ENCODE measurements at regions of chr20 and their contacts with region 1.

Region 1: GRCh38 chr20:62953839-62954703 is 1.6 kb downstream of the SLC17A9 start:
- DNase-seq: peak; percentile 94
- ATAC-seq: peak; percentile 82
- H3K4me3 ChIP-seq: peak overlapping the region; percentile 23 to 62 (median 54)
- H3K4me3 Mint-ChIP-seq: peak overlapping the region; percentile 85
- H3K27ac ChIP-seq: peak overlapping the region; percentile 82 to 91
- H3K27ac Mint-ChIP-seq: peak overlapping the region; percentile 92
- H3K4me1 ChIP-seq: peaks cover 31 to 47% of the 10 kb centered on the region in 2 donors
- H3K4me1 Mint-ChIP-seq: peaks cover 44% of the 10 kb centered on the region
- H3K27me3 ChIP-seq: no peaks in the 10 kb centered on the region
- H3K27me3 Mint-ChIP-seq: no peaks in the 10 kb centered on the region
- CTCF ChIP-seq: no peak

Region 2: GRCh38 chr20:62237801-62238571 is 716.1 kb before region 1 on chr20 and contains the start of gene OSBPL2:
- CTCF ChIA-PET with region 1: no interaction called
- POLR2A ChIA-PET with region 1: no interaction called
- intact Hi-C with region 1: loop called (anchors 5 kb)
- DNase-seq: peak; percentile 100
- ATAC-seq: peak; percentile 98
- H3K4me3 ChIP-seq: peak within 1 kb of the TSS; percentile 46 to 74 (median 60)
- H3K4me3 Mint-ChIP-seq: peak within 1 kb of the TSS; percentile 90
- H3K27ac ChIP-seq: peak within 1 kb of the TSS; percentile 43 to 83
- H3K27ac Mint-ChIP-seq: peak within 1 kb of the TSS; percentile 96
- H3K4me1 ChIP-seq: peaks cover 17 to 22% of the 10 kb centered on the region in 2 donors
- H3K4me1 Mint-ChIP-seq: peaks cover 30% of the 10 kb centered on the region
- H3K27me3 ChIP-seq: peaks cover 0 to 17% (median 1%) of the 10 kb centered on the region in 4 experiments
- H3K27me3 Mint-ChIP-seq: peaks cover 7% of the 10 kb centered on the region
- CTCF ChIP-seq: no peak
- total RNA-seq, gene OSBPL2: 74.3 and 76.6 TPM in 2 replicates

Region 3: DNA sequence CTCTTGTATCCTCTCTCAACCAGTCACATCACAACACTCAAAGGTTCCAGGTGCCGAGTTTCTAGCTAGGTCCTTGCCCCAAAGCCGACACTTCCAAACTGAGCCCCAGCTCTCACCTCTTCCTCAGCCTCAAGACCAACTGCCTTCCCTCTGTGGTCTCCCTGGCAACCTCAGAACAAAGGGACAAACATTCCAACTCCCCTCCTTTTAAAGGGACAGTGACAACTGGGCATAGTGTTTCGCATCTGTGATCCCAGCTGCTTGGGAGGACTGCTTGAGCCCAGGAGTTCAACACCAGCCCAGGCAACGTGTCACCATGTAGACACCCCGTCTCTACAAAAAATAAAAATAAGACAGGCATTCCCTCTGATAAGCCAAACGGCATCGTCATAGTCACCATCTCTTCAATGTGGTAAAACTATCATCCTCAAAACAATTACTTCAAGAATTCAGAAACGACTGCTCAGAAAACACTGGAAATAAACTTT is 39.1 kb before region 1 on chr20:
- CTCF ChIA-PET with region 1: no interaction called
- POLR2A ChIA-PET with region 1: interaction called, 3 read pairs
- intact Hi-C with region 1: loop called (anchors 5 kb)
- DNase-seq: no peak
- ATAC-seq: no peak
- H3K4me3 ChIP-seq: no peak overlapping the region
- H3K4me3 Mint-ChIP-seq: peak overlapping the region; percentile 37
- H3K27ac ChIP-seq: no peak overlapping the region
- H3K27ac Mint-ChIP-seq: no peak overlapping the region
- H3K4me1 ChIP-seq: peaks cover 40 to 42% of the 10 kb centered on the region in 2 donors
- H3K4me1 Mint-ChIP-seq: peaks cover 52% of the 10 kb centered on the region
- H3K27me3 ChIP-seq: no peaks in the 10 kb centered on the region
- H3K27me3 Mint-ChIP-seq: no peaks in the 10 kb centered on the region
- CTCF ChIP-seq: no peak

Region 4: DNA sequence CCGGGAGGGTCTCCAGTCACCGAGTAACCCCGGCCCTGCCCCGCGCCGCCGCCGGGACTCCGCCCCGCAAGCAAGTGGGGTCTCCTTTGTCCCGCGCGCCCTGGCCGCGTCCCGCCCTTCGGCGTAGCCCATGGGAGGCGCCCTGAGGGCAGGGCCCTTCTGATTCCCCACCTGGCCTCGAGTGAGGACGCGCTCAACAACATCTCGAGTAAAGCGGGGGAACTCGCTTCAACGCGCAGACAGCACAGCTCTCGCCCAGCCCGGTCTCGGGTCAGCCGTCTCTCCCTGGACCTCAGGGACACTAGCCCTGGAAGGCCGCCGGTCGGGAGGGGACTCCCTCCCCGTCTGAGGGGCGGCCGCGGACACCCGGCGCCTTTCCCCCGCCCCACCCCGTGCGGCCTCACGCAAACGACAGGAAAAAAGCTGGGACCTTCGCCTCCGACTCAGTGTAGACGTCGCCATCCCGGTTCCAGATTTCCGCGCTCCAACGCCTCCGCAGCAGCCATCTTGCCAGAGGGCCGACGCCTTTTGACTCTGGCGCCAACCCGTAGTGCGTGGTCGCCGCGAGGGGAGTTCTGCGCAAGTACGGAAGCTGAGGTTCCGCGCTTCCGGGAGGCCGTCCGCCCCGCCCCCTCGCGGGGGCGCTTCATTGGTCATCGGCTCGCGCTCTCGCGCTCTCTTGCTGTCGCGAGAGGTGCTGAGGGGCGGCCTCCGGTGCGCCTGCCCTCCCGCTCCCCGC is 16.5 kb before region 1 on chr20:
- CTCF ChIA-PET with region 1: interaction called, 6 read pairs
- POLR2A ChIA-PET with region 1: interaction called, 42 read pairs
- intact Hi-C with region 1: loop called (anchors 1 kb)
- DNase-seq: peak; percentile 97
- ATAC-seq: peak; percentile 90
- H3K4me3 ChIP-seq: peak overlapping the region; percentile 53 to 100 (median 81)
- H3K4me3 Mint-ChIP-seq: peak overlapping the region; percentile 89
- H3K27ac ChIP-seq: peak overlapping the region; percentile 91 to 93
- H3K27ac Mint-ChIP-seq: peak overlapping the region; percentile 92
- H3K4me1 ChIP-seq: peaks cover 26 to 42% of the 10 kb centered on the region in 2 donors
- H3K4me1 Mint-ChIP-seq: peaks cover 36% of the 10 kb centered on the region
- H3K27me3 ChIP-seq: no peaks in the 10 kb centered on the region
- H3K27me3 Mint-ChIP-seq: no peaks in the 10 kb centered on the region
- CTCF ChIP-seq: no peak

Region 5: DNA sequence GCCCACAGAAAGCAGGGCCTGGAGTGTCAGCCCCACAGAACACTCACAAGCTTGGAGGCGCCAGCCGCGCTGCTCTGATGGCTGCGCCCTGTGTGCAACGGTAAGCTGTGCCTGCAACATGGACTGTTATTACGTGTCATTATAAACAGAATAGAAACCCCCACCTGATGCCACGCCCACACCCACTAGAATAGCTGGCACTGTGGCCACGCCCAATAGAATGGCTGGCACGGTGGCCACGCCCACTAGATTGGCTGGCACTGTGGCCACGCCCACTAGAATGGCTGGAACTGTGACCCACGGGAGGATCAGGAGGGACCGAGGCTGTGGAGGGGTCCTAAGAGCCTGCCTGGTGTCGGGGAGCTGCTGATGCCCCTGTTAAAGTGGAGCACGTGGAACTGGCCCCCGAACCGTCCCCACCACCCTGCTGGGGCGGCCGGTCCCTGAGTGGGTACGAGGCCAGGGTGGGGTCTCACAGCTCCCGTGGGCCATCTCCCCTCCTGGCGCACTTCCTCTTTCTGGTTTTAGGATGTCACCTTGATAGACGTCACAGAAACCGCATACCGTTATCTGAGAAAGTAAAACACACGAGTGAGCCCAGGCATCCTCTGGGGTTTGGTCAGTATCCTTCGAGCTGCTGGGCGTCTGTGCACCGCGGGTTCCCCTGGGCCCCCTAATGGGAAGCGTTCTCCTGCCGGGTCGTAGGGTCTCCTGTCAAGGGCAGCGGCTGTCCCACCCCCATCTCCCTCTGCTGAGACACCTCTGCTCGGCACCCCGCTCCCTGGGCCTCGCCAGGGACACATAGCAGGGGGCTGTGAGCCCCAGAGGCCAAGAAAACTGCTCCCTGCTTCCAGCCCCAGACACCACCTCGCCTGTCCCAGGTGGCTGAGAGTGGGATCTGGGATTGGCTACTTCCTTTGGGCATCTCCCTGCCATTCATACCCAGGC is 23.8 kb after region 1 on chr20:
- CTCF ChIA-PET with region 1: interaction called, 24 read pairs
- POLR2A ChIA-PET with region 1: interaction called, 8 read pairs
- intact Hi-C with region 1: loop called (anchors 1 kb)
- DNase-seq: peak; percentile 96
- ATAC-seq: peak; percentile 79
- H3K4me3 ChIP-seq: peak overlapping the region in 4 of 5 experiments; percentile 12 to 54 (median 35)
- H3K4me3 Mint-ChIP-seq: peak overlapping the region; percentile 88
- H3K27ac ChIP-seq: no peak overlapping the region
- H3K27ac Mint-ChIP-seq: peak overlapping the region; percentile 91
- H3K4me1 ChIP-seq: peaks cover 63 to 64% of the 10 kb centered on the region in 2 donors
- H3K4me1 Mint-ChIP-seq: peaks cover 51% of the 10 kb centered on the region
- H3K27me3 ChIP-seq: peaks cover 0 to 95% (median 53%) of the 10 kb centered on the region in 4 experiments
- H3K27me3 Mint-ChIP-seq: peaks cover 47% of the 10 kb centered on the region
- CTCF ChIP-seq: no peak

Region 6: GRCh38 chr20:63894358-63895201 is 940.5 kb after region 1 on chr20 and contains the start of gene DNAJC5:
- CTCF ChIA-PET with region 1: no interaction called
- POLR2A ChIA-PET with region 1: no interaction called
- intact Hi-C with region 1: loop called (anchors 10 kb)
- DNase-seq: peak; percentile 98
- ATAC-seq: peak; percentile 94
- H3K4me3 ChIP-seq: peak within 1 kb of the TSS; percentile 38 to 81 (median 60)
- H3K4me3 Mint-ChIP-seq: peak within 1 kb of the TSS; percentile 93
- H3K27ac ChIP-seq: peak within 1 kb of the TSS; percentile 42 to 80
- H3K27ac Mint-ChIP-seq: peak within 1 kb of the TSS; percentile 91
- H3K4me1 ChIP-seq: peaks cover 16 to 36% of the 10 kb centered on the region in 2 donors
- H3K4me1 Mint-ChIP-seq: peaks cover 37% of the 10 kb centered on the region
- H3K27me3 ChIP-seq: no peaks in the 10 kb centered on the region
- H3K27me3 Mint-ChIP-seq: no peaks in the 10 kb centered on the region
- CTCF ChIP-seq: no peak
- total RNA-seq, gene DNAJC5: 32.6 and 33.3 TPM in 2 replicates